ENCODE measurements at regions of chr7 and their contacts with region 1.

Region 1: GRCh38 chr7:71612911-71613310 is 481.0 kb downstream of the GALNT17 start:
- DNase-seq: peak in 2 of 5 donors; percentile 26 to 35
- ATAC-seq: peak; percentile 19 to 66 (median 58)
- H3K4me3 ChIP-seq: no peak overlapping the region
- H3K27ac ChIP-seq: peak overlapping the region in 10 of 12 donors; percentile 26 to 87 (median 74)
- H3K4me1 ChIP-seq: peaks cover 0 to 38% (median 15%) of the 10 kb centered on the region in 12 donors
- H3K27me3 ChIP-seq: no peaks in the 10 kb centered on the region
- CTCF ChIP-seq: no peak
- POLR2A ChIP-seq: no peak

Region 2: GRCh38 chr7:71457846-71458590 is 154.9 kb before region 1 on chr7:
- intact Hi-C with region 1: loop called in 1 of 10 experiments (anchors 10 kb)
- DNase-seq: peak in 1 of 5 donors; percentile 30
- ATAC-seq: peak; percentile 68 to 84 (median 80)
- H3K4me3 ChIP-seq: no peak overlapping the region
- H3K27ac ChIP-seq: peak overlapping the region in 8 of 12 donors; percentile 4 to 65 (median 40)
- H3K4me1 ChIP-seq: peaks cover 0 to 32% (median 7%) of the 10 kb centered on the region in 12 donors
- H3K27me3 ChIP-seq: no peaks in the 10 kb centered on the region
- CTCF ChIP-seq: no peak
- POLR2A ChIP-seq: no peak

Region 3: GRCh38 chr7:71558806-71559613 is 53.9 kb before region 1 on chr7:
- intact Hi-C with region 1: loop called in 1 of 10 experiments (anchors 10 kb)
- DNase-seq: no peak
- ATAC-seq: no peak
- H3K4me3 ChIP-seq: no peak overlapping the region
- H3K27ac ChIP-seq: no peak overlapping the region
- H3K4me1 ChIP-seq: no peaks in the 10 kb centered on the region
- H3K27me3 ChIP-seq: no peaks in the 10 kb centered on the region
- CTCF ChIP-seq: no peak
- POLR2A ChIP-seq: no peak

Region 4: DNA sequence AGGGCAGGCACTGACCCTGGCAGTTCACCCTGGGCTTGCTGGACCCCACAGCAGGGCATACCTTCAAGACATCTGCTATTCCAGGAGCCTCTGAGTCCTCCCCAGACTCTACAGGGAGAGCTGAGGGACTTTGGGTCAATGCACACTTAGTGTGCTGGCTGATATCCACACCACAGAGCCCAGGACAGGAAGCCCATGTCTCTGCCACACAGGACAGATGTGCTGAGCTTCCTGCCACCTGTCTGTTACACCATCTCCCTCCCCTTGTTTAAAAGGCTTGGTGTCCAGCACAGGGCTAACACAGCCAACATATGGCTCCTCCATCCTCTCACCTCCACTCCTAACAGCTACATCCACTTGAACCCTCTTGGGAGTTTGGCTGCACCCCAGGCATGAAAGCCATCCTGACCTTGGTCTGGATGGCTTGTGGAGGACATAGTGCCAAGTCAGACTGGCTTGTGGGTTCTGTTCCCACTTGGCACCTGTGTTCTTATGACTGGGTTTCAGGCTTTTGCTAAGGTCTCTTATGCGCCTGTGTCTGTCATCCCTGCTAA is 48.8 kb after region 1 on chr7:
- intact Hi-C with region 1: loop called in 1 of 10 experiments (anchors 5 kb)
- DNase-seq: peak; percentile 36 to 83 (median 66)
- ATAC-seq: peak; percentile 72 to 94 (median 92)
- H3K4me3 ChIP-seq: no peak overlapping the region
- H3K27ac ChIP-seq: peak overlapping the region in 7 of 12 donors; percentile 9 to 51 (median 46)
- H3K4me1 ChIP-seq: peaks cover 0 to 25% (median 1%) of the 10 kb centered on the region in 12 donors
- H3K27me3 ChIP-seq: no peaks in the 10 kb centered on the region
- CTCF ChIP-seq: no peak
- POLR2A ChIP-seq: no peak

Region 5: GRCh38 chr7:71723859-71724258 is 110.9 kb after region 1 on chr7:
- intact Hi-C with region 1: loop called in 2 of 10 experiments (anchors 5 to 10 kb)
- DNase-seq: no peak
- ATAC-seq: peak; percentile 40 to 59 (median 47)
- H3K4me3 ChIP-seq: no peak overlapping the region
- H3K27ac ChIP-seq: no peak overlapping the region
- H3K4me1 ChIP-seq: peaks cover 0 to 3% (median 0%) of the 10 kb centered on the region in 12 donors
- H3K27me3 ChIP-seq: no peaks in the 10 kb centered on the region
- CTCF ChIP-seq: no peak
- POLR2A ChIP-seq: no peak

Measured in heart left ventricle (tissue), 16 donors.